Mammary epithelial cell (primary cell): ENCODE measurements at regions of chr4 and their contacts with region 1.

Region 1: DNA sequence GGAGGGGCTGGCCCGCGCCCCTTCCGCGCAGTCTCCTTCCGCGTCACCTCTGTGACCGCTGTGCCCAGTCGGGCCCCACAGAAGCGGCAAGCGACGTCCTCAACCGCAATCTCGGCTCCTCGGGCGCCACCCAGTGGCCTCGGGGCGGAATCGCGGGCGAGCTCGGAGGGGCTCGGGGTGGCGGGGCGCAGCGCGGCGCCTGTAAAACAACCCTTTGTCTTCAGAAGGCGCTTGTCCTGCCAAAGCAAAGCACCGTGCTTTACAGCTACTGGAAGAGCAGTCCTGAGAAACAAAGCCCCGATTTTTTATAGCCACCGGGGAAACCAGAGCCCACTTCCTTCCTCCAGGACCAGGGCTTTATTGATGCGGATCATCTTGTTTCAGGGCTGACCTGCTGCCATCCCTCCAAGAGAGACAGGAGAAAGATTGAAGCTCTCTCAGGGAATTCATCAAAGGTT is 37.3 kb upstream of the CDKN2AIP start:
- DNase-seq: peak; percentile 63
- H3K4me3 ChIP-seq: peak overlapping the region; percentile 44 to 54 (median 47)
- H3K27ac ChIP-seq: no peak overlapping the region
- H3K4me1 ChIP-seq: no peaks in the 10 kb centered on the region
- H3K27me3 ChIP-seq: no peaks in the 10 kb centered on the region
- CTCF ChIP-seq: peak; percentile 64 to 94

Region 2: GRCh38 chr4:183261953-183262775 is 145.0 kb before region 1 on chr4:
- CTCF ChIA-PET with region 1: no interaction called
- dilution Hi-C with region 1: no loop called
- in situ Hi-C with region 1: no loop called
- intact Hi-C with region 1: loop called (anchors 1 kb)
- DNase-seq: peak; percentile 64
- H3K4me3 ChIP-seq: no peak overlapping the region
- H3K27ac ChIP-seq: no peak overlapping the region
- H3K4me1 ChIP-seq: no peaks in the 10 kb centered on the region
- H3K27me3 ChIP-seq: no peaks in the 10 kb centered on the region
- CTCF ChIP-seq: peak; percentile 85 to 92

Region 3: DNA sequence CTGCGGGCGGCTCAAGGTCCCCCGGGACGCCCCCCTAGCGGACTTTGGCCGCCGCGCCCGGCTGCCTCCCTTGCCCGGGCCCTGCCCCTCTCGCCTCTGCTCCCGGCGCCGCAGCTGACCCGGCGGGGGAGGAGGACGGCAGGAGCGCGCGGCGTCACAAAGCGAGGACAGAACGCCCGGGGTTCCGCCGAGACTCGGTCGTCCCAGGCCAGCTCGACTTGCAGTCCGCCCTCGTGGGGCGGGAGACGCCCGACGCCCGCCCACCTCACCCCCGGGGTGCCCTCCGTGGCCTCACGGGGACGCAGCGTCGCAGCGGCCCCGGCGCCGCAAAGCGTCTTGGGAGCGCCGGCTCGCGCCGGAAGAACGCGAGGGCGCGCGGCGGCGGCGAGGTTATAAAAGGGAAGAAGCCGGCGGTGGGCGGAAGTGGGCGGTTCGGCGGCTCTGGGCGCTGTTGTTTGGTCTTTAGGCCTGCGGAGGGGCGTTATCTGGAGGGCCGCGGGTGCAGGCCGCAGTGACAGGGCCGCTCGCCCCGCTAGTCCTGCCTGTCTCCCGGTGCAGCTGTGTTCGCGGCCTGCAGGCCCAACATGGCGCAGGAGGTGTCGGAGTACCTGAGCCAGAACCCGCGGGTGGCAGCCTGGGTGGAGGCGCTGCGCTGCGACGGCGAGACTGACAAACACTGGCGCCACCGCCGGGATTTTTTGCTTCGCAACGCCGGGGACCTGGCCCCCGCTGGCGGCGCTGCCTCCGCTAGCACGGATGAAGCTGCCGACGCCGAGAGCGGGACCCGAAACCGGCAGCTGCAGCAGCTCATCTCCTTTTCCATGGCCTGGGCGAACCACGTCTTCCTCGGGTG is 37.3 kb after region 1 on chr4 and contains the start of gene CDKN2AIP:
- CTCF ChIA-PET with region 1: no interaction called
- dilution Hi-C with region 1: no loop called
- in situ Hi-C with region 1: no loop called
- intact Hi-C with region 1: loop called (anchors 2 kb)
- DNase-seq: peak; percentile 97
- H3K4me3 ChIP-seq: peak within 1 kb of the TSS; percentile 58 to 95 (median 95)
- H3K27ac ChIP-seq: peak within 1 kb of the TSS; percentile 96
- H3K4me1 ChIP-seq: peaks cover 14% of the 10 kb centered on the region
- H3K27me3 ChIP-seq: no peaks in the 10 kb centered on the region
- CTCF ChIP-seq: peak in 1 of 2 donors; percentile 18
- total RNA-seq, gene CDKN2AIP: 12.7 to 14.3 TPM